Naive thymus-derived CD4-positive, alpha-beta T cell (primary cell): ENCODE measurements at regions of chr1 and their contacts with region 1.

Region 1: DNA sequence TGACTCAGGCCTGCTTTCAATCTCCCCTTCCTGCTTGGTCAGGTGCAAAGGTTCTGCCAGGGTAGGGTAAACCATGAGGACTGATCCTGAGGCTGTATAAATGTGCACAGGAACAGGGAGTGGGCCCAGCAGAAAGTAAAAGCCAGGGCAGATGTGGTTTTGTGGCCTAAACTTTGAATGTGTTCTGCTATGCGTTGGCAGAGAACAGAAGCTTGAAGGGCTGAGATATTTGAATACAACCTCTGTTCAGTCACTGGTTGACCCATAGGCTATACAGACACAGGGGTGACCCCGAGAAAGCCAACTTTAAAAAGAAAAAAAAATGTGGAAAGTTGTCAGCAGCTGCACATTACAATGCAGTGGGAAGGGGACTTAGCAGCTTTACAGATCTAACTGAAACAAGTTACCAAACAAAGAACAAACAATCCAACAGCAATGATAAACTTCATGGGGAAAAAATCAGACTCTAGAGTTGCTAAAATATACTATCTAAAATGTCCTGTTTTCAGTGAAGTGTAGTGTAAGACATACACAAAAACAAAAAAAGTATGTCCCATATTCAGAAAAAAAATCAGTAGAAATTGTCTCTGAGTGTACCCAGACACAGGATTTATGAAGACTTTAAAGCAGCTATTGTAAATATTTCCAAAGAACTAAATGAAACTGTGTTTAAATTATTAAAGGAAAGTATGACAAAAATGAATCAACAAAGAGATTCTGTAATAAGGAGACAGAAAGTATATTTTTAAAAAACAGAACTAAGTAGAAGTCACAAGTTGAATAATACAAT is 216.1 kb downstream of the RPS6KC1 start:
- DNase-seq: no peak
- ATAC-seq: no peak
- H3K4me3 ChIP-seq: no peak overlapping the region
- H3K4me3 Mint-ChIP-seq: no peak overlapping the region
- H3K27ac ChIP-seq: no peak overlapping the region
- H3K27ac Mint-ChIP-seq: no peak overlapping the region
- H3K4me1 ChIP-seq: no peaks in the 10 kb centered on the region
- H3K4me1 Mint-ChIP-seq: peaks cover 0 to 1% (median 0%) of the 10 kb centered on the region in 7 donors
- H3K27me3 ChIP-seq: no peaks in the 10 kb centered on the region
- H3K27me3 Mint-ChIP-seq: no peaks in the 10 kb centered on the region

Region 2: DNA sequence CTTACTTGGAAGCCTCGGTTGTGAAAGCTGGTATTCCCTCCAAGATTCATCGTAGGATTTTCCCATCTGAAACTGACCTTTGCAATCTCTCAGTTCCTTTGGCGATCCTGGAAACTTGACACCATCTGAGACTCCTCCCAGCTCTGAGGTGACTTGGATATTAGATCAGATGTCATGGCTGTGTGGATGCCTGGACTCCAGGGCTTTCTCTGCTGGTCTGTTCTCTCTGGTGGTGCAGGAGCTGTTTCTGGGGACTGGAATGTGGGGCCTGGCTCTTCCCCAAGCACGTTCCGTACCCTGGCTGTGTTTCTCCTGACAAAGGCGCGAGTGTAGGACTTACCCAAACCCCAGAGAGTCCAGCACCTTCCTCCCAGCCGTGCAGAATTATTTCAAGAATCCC is 36.1 kb after region 1 on chr1:
- CTCF ChIA-PET with region 1: no interaction called
- POLR2A ChIA-PET with region 1: no interaction called
- intact Hi-C with region 1: loop called in 1 of 2 experiments (anchors 1 kb)
- DNase-seq: no peak
- ATAC-seq: no peak
- H3K4me3 ChIP-seq: no peak overlapping the region
- H3K4me3 Mint-ChIP-seq: no peak overlapping the region
- H3K27ac ChIP-seq: no peak overlapping the region
- H3K27ac Mint-ChIP-seq: no peak overlapping the region
- H3K4me1 ChIP-seq: no peaks in the 10 kb centered on the region
- H3K4me1 Mint-ChIP-seq: no peaks in the 10 kb centered on the region
- H3K27me3 ChIP-seq: no peaks in the 10 kb centered on the region
- H3K27me3 Mint-ChIP-seq: no peaks in the 10 kb centered on the region

Region 3: GRCh38 chr1:213585959-213586586 is 318.9 kb after region 1 on chr1:
- CTCF ChIA-PET with region 1: no interaction called
- POLR2A ChIA-PET with region 1: no interaction called
- intact Hi-C with region 1: no loop called
- DNase-seq: no peak
- ATAC-seq: no peak
- H3K4me3 ChIP-seq: no peak overlapping the region
- H3K4me3 Mint-ChIP-seq: no peak overlapping the region
- H3K27ac ChIP-seq: no peak overlapping the region
- H3K27ac Mint-ChIP-seq: no peak overlapping the region
- H3K4me1 ChIP-seq: no peaks in the 10 kb centered on the region
- H3K4me1 Mint-ChIP-seq: peaks cover 0 to 7% (median 0%) of the 10 kb centered on the region in 7 donors
- H3K27me3 ChIP-seq: no peaks in the 10 kb centered on the region
- H3K27me3 Mint-ChIP-seq: peaks cover 0 to 8% (median 0%) of the 10 kb centered on the region in 5 donors